Activated CD4-positive, alpha-beta memory T cell treated with anti-CD3 and anti-CD28 coated beads, Interleukin-2, amount 10 ng/mL, durations not matched to agents 7 days and 5 days (primary cell): ENCODE measurements at regions of chr1 and their contacts with region 1.

Region 1: DNA sequence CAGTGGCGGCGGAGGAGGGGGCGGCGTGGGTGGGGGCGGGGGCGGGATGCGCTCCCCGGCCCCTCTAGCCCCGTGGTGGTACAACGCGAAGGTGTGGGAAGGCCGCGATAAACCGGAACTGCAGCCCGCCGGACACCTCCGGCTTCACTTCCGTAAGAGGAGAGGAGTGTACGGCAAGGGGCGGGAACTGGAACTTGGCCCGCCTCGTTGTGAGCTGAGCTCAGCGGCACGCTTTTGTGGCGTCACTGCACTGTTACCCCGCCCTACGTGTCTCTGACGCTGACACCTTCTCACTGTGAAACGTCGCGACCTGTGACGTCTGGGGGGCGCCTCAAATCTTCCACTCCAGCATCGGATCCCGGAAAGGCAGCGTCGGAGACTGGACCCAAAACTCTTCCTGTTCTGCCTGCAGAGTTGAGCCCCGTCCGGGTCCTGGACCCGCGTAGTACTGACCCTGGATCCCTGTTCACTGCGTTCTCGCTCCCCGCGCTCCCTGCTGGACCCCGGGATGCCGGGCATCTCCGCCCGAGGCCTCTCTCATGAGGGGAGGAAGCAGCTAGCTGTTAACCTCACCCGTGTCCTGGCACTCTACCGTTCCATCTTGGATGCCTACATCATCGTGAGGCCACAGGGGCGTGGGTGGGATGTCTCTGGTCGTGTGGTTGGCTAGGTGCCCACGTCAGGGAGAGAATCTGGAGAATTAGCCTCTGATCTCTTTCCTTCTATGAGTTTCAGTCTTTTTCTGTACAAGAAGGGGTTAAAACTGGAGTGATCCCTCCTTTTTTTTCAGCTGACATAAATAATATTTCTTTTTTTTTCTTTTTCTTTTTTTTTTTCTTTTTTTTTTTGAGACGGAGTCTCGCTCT is at the start of gene ISG20L2:
- DNase-seq: peak; percentile 98
- H3K4me3 Mint-ChIP-seq: no peak within 1 kb of the TSS
- H3K27ac Mint-ChIP-seq: no peak within 1 kb of the TSS
- H3K4me1 Mint-ChIP-seq: peaks cover 24% of the 10 kb centered on the region
- H3K27me3 Mint-ChIP-seq: no peaks in the 10 kb centered on the region
- total RNA-seq, gene ISG20L2: 42.0 to 43.3 TPM

Region 2: DNA sequence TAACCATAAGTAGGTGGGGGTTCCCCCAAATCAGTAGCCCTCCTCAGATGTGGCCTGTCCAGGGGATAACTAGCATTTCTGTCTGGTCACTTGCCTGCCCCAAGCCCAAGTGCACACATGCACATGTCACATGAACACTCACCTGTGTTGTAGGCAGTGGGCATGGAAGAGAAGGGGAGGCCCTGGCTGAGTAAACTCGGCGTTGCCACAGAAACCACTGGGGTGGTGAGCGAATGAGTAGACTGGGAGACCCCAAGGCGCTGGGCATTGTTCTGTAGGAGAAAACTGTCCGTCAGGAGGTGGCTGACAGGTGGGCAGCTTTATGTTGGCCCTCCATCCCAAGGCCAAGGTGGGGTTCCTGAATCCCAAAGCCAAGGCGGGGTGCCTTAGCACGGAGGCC is 253.9 kb before region 1 on chr1:
- CTCF ChIA-PET with region 1: no interaction called
- POLR2A ChIA-PET with region 1: no interaction called
- DNase-seq: no peak
- H3K4me3 Mint-ChIP-seq: no peak overlapping the region
- H3K27ac Mint-ChIP-seq: no peak overlapping the region
- H3K4me1 Mint-ChIP-seq: peaks cover 18% of the 10 kb centered on the region
- H3K27me3 Mint-ChIP-seq: no peaks in the 10 kb centered on the region

Region 3: GRCh38 chr1:156677616-156678596 is 50.9 kb before region 1 on chr1:
- CTCF ChIA-PET with region 1: interaction called, 212 read pairs
- POLR2A ChIA-PET with region 1: interaction called, 7 read pairs
- DNase-seq: peak; percentile 35
- H3K4me3 Mint-ChIP-seq: no peak overlapping the region
- H3K27ac Mint-ChIP-seq: no peak overlapping the region
- H3K4me1 Mint-ChIP-seq: peaks cover 14% of the 10 kb centered on the region
- H3K27me3 Mint-ChIP-seq: peaks cover 76% of the 10 kb centered on the region

Region 4: DNA sequence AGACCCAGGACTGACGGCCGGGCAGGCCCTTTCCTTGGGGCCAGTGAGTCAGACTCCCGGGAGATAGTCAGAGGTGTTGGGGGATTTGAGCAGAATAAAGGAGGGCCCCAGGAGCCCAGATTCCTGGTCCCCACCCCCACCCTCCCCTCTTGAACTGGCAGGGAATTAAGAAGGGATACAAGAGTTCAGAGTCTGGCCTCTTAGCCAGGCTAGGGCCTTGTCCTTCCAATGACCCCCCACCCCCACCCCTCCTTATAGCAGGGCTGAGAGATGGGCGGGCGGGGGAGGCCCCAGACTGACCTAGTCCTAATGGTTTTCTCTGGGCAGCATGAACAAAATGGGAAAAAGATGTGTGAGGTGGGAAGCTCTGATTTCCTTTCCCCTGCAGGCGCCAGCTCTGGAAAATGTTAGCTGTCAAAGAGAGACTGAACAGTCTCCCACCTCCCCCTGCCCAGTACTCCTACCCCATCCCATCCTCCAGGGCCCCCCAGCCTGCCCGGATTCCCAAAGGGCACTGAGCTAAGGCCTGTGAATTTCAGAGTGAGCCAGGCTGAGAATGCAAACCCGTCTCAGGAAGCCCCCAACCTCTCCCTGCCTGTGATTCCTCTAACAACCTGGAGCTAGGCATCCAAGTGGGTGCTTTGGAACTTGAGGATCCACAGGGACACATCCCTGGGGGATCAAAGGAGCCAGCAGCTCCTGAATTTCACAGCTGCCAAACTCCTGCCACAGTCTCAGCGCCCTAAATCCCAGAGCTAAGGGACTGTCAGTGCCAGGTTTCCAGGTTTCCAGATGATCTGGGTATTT is 17.6 kb before region 1 on chr1:
- CTCF ChIA-PET with region 1: interaction called, 34 read pairs
- POLR2A ChIA-PET with region 1: interaction called, 10 read pairs
- DNase-seq: no peak
- H3K4me3 Mint-ChIP-seq: no peak overlapping the region
- H3K27ac Mint-ChIP-seq: no peak overlapping the region
- H3K4me1 Mint-ChIP-seq: peaks cover 9% of the 10 kb centered on the region
- H3K27me3 Mint-ChIP-seq: peaks cover 9% of the 10 kb centered on the region

Region 5: GRCh38 chr1:156746728-156747631 is 18.1 kb after region 1 on chr1:
- CTCF ChIA-PET with region 1: interaction called, 78 read pairs
- POLR2A ChIA-PET with region 1: interaction called, 150 read pairs
- DNase-seq: peak; percentile 59
- H3K4me3 Mint-ChIP-seq: peak overlapping the region; percentile 94
- H3K27ac Mint-ChIP-seq: peak overlapping the region; percentile 95
- H3K4me1 Mint-ChIP-seq: peaks cover 69% of the 10 kb centered on the region
- H3K27me3 Mint-ChIP-seq: no peaks in the 10 kb centered on the region

Region 6: GRCh38 chr1:156786655-156787054 is 57.8 kb after region 1 on chr1:
- CTCF ChIA-PET with region 1: interaction called, 12 read pairs
- POLR2A ChIA-PET with region 1: interaction called, 4 read pairs
- DNase-seq: no peak
- H3K4me3 Mint-ChIP-seq: no peak overlapping the region
- H3K27ac Mint-ChIP-seq: no peak overlapping the region
- H3K4me1 Mint-ChIP-seq: peaks cover 22% of the 10 kb centered on the region
- H3K27me3 Mint-ChIP-seq: no peaks in the 10 kb centered on the region

Region 7: DNA sequence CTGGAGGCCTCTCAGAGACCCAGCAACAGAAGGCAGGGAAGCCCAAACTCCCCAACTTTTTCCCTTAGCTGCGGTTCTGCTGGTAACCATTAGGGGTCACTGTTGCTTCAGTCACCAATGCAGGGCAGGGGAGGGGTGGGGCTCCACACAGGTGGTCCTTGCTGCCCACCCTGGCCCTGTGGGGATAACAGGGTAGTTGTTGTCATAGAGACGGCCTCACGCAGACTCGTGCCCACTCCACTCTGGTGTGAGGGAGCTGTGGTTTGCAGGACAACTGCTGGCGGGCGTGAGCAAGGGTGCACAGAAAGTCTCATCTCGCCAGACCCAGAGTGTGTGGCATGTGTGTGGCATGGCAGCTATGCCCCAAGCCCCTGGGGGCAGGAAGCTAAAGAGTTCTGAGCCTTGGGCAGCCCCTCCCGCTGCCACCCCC is 110.2 kb after region 1 on chr1:
- CTCF ChIA-PET with region 1: interaction called, 19 read pairs
- POLR2A ChIA-PET with region 1: interaction called, 3 read pairs
- DNase-seq: peak; percentile 57
- H3K4me3 Mint-ChIP-seq: no peak overlapping the region
- H3K27ac Mint-ChIP-seq: no peak overlapping the region
- H3K4me1 Mint-ChIP-seq: peaks cover 41% of the 10 kb centered on the region
- H3K27me3 Mint-ChIP-seq: peaks cover 44% of the 10 kb centered on the region

Region 8: GRCh38 chr1:156927215-156928042 is 198.6 kb after region 1 on chr1:
- CTCF ChIA-PET with region 1: interaction called, 10 read pairs
- POLR2A ChIA-PET with region 1: no interaction called
- DNase-seq: peak; percentile 71
- H3K4me3 Mint-ChIP-seq: no peak overlapping the region
- H3K27ac Mint-ChIP-seq: no peak overlapping the region
- H3K4me1 Mint-ChIP-seq: peaks cover 22% of the 10 kb centered on the region
- H3K27me3 Mint-ChIP-seq: peaks cover 86% of the 10 kb centered on the region